ENCODE measurements at regions of chr14 and their contacts with region 1.

Region 1: DNA sequence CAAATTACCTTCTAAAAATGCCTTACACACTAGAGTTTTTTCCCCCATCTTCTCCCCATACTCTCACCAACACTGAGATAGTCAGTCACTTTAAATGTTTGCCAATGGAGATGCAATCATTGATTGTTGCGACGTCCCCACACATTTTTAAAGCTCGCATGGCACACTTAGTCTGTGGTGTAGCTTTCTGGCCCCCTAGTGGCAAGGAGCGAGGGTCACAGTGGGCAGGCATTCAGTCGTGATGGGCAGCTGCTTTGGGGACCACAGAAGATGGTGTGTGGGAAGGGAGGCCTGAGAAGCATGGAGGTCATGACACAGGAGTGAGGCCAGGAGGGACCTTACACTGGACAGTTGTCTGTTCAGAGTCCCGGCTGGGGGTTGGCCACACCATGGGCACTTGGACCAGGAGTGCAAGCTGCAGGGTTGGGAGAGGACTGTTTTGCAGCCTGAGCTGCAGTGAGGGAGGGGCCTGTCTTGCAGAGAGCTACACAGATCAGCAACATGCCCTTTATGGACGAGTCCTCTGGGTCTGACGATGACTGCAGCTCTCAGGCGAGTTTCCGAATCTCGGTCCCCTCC is 28.7 kb downstream of the PIGH start:
- DNase-seq: peak; percentile 40 to 77
- ATAC-seq: peak; percentile 76

Region 2: DNA sequence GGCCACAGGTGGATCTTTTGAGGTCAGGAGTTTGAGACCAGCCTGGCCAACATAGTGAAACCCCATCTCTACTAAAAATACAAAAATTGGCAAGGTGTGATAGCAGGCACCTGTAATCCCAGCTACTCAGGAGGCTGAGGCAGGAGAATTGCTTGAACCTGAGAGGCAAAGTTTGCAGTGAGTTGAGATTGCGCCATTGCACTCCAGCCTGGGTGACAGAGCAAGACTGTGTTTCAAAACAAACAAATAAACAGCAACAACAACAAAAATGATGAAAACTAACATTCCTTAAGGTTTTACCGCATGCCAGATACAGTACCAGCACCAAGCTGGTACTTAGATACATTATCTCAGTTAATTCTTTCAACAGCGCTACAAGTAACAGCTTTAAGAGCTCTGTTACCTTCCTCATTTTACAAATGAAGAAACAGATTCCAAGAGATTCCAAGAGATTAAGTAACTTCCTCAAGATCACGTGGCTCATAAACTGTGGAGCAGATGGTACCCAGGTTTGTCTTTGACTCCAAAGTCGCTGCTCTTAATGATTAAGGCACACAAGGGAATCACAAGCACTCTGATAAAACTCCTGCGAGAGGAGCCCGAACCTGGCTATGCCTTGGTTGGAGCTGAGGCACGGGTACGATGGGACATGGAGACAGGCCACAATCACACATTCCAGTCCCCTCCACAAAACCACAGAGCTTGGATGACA is 141.7 kb before region 1 on chr14:
- intact Hi-C with region 1: loop called in 1 of 2 experiments (anchors 2 kb)
- DNase-seq: no peak
- ATAC-seq: no peak

Region 3: GRCh38 chr14:67526676-67527459 is 44.5 kb before region 1 on chr14:
- intact Hi-C with region 1: loop called in 1 of 2 experiments (anchors 5 kb)
- DNase-seq: peak; percentile 42 to 52
- ATAC-seq: peak; percentile 80